HepG2 (cell line): ENCODE measurements at regions of chr18 and their contacts with region 1.

Region 1: DNA sequence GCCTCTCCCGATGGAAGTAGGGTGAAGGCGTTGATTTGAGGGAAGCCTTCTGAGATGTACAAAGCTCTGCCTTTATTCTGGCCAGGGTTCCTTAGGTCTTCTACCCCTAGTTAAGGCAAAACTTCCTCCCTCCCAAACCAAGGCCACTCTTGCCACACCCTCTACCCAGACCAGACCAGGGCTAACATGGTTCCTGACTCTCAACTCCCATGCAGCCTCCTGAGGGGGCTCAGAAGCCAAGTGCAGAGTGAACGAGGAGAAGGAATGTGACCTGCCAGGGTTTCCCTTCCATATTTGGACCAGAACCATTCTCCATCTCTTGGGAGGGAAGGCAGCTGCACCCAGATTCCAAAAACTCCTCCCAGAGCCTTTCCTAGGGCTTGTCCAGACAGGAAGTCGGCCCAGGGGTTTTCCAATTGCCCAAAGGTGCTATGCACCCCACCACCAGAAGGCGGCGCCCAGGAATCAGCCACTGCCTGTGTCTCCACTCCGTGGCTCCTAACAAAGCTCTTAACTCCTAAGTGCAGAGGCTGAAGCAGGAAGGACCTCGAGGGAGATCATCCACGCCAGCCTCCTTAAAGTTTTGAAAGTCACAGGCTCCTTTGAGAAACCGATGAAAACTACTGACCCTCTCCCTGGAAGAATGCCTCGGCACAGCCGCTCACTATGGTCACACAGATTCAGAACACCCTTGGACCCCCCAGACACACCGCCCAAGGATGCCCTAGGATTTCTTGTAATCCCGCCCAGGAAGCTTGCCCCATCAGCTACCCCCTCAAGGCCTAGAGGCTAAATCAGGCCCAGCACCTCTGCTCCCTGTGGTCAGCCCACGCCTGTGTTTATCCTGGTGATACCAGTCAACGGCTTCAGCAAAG is 157.8 kb downstream of the SMAD2 start:
- DNase-seq: peak; percentile 29
- ATAC-seq: peak; percentile 88
- H3K4me3 ChIP-seq: no peak overlapping the region
- H3K27ac ChIP-seq: no peak overlapping the region
- H3K4me1 ChIP-seq: no peaks in the 10 kb centered on the region
- H3K27me3 ChIP-seq: peaks cover 0 to 4% of the 10 kb centered on the region in 2 experiments; a peak in 2 of 5 replicates
- CTCF ChIP-seq: peak; percentile 86
- EP300 ChIP-seq: no peak
- POLR2A ChIP-seq: no peak
- RAD21 ChIP-seq: peak; percentile 39; the same call in 1 of the 2 replicates

Region 2: GRCh38 chr18:47832348-47832747 is 59.7 kb after region 1 on chr18:
- CTCF ChIA-PET with region 1: no interaction called
- POLR2A ChIA-PET with region 1: no interaction called
- in situ Hi-C with region 1: no loop called
- intact Hi-C with region 1: no loop called
- DNase-seq: no peak
- ATAC-seq: no peak
- H3K4me3 ChIP-seq: no peak overlapping the region
- H3K27ac ChIP-seq: no peak overlapping the region
- H3K4me1 ChIP-seq: no peaks in the 10 kb centered on the region
- H3K27me3 ChIP-seq: no peaks in the 10 kb centered on the region; a peak in 1 of 5 replicates
- CTCF ChIP-seq: no peak
- EP300 ChIP-seq: no peak
- POLR2A ChIP-seq: no peak
- RAD21 ChIP-seq: no peak

Region 3: DNA sequence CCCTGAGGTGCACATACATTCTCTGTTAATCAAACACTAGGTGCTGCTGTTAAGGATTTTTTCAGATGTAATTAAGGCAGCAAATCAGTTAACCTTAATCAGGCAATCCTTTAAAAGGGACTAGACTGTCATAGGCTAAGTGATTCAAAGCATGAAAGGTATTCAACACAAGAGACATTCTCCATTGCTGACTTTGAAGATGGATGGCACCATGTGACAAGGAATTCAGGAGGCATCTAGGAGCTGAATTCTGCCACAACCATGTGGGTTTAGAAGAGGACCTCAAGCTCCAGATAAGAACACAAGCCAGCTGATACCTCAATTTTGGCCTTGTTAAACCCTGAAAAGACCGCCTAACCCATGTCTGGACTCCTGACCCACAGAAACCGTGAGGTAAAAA is 73.8 kb after region 1 on chr18:
- CTCF ChIA-PET with region 1: no interaction called
- POLR2A ChIA-PET with region 1: no interaction called
- in situ Hi-C with region 1: no loop called
- intact Hi-C with region 1: no loop called
- DNase-seq: no peak
- ATAC-seq: no peak
- H3K4me3 ChIP-seq: no peak overlapping the region
- H3K27ac ChIP-seq: no peak overlapping the region
- H3K4me1 ChIP-seq: no peaks in the 10 kb centered on the region
- H3K27me3 ChIP-seq: no peaks in the 10 kb centered on the region
- CTCF ChIP-seq: no peak
- EP300 ChIP-seq: no peak
- POLR2A ChIP-seq: no peak
- RAD21 ChIP-seq: no peak

Region 4: GRCh38 chr18:48022531-48023329 is 250.1 kb after region 1 on chr18:
- CTCF ChIA-PET with region 1: interaction called, 23 read pairs
- POLR2A ChIA-PET with region 1: no interaction called
- in situ Hi-C with region 1: loop called (anchors 5 kb)
- intact Hi-C with region 1: loop called (anchors 1 kb)
- DNase-seq: peak; percentile 59
- ATAC-seq: peak; percentile 87
- H3K4me3 ChIP-seq: no peak overlapping the region
- H3K27ac ChIP-seq: no peak overlapping the region
- H3K4me1 ChIP-seq: no peaks in the 10 kb centered on the region
- H3K27me3 ChIP-seq: peaks cover 0 to 15% of the 10 kb centered on the region in 2 experiments; a peak in 1 of 5 replicates
- CTCF ChIP-seq: peak; percentile 79
- EP300 ChIP-seq: no peak
- POLR2A ChIP-seq: no peak
- RAD21 ChIP-seq: peak; percentile 31; the same call in 1 of the 2 replicates